Mammary epithelial cell (primary cell): ENCODE measurements at regions of chr22 and their contacts with region 1.

Region 1: GRCh38 chr22:32904044-32904443 is 102.5 kb downstream of the TIMP3 start:
- DNase-seq: peak; percentile 39
- H3K4me3 ChIP-seq: no peak overlapping the region
- H3K27ac ChIP-seq: no peak overlapping the region
- H3K4me1 ChIP-seq: no peaks in the 10 kb centered on the region
- H3K27me3 ChIP-seq: no peaks in the 10 kb centered on the region
- CTCF ChIP-seq: no peak

Region 2: GRCh38 chr22:32957200-32957803 is 53.3 kb after region 1 on chr22:
- CTCF ChIA-PET with region 1: no interaction called
- dilution Hi-C with region 1: loop called (anchors 5 kb)
- in situ Hi-C with region 1: no loop called
- intact Hi-C with region 1: no loop called
- DNase-seq: no peak
- H3K4me3 ChIP-seq: no peak overlapping the region
- H3K27ac ChIP-seq: no peak overlapping the region
- H3K4me1 ChIP-seq: no peaks in the 10 kb centered on the region
- H3K27me3 ChIP-seq: no peaks in the 10 kb centered on the region
- CTCF ChIP-seq: no peak

Region 3: GRCh38 chr22:33180356-33180755 is 276.3 kb after region 1 on chr22:
- CTCF ChIA-PET with region 1: no interaction called
- dilution Hi-C with region 1: no loop called
- in situ Hi-C with region 1: no loop called
- intact Hi-C with region 1: no loop called
- DNase-seq: no peak
- H3K4me3 ChIP-seq: no peak overlapping the region
- H3K27ac ChIP-seq: no peak overlapping the region
- H3K4me1 ChIP-seq: no peaks in the 10 kb centered on the region
- H3K27me3 ChIP-seq: peaks cover 2% of the 10 kb centered on the region
- CTCF ChIP-seq: no peak